Calu3 (cell line): ENCODE measurements at regions of chr7 and their contacts with region 1.

Region 1: GRCh38 chr7:130242198-130243014 is 24.3 kb upstream of the CPA2 start:
- DNase-seq: peak; percentile 77
- H3K4me3 Mint-ChIP-seq: no peak overlapping the region
- H3K27ac Mint-ChIP-seq: no peak overlapping the region
- H3K4me1 Mint-ChIP-seq: no peaks in the 10 kb centered on the region
- H3K27me3 Mint-ChIP-seq: peaks cover 22% of the 10 kb centered on the region
- CTCF ChIP-seq: peak; percentile 95

Region 2: GRCh38 chr7:130047821-130048220 is 194.6 kb before region 1 on chr7:
- CTCF ChIA-PET with region 1: no interaction called
- intact Hi-C with region 1: no loop called
- DNase-seq: no peak
- H3K4me3 Mint-ChIP-seq: no peak overlapping the region
- H3K27ac Mint-ChIP-seq: no peak overlapping the region
- H3K4me1 Mint-ChIP-seq: no peaks in the 10 kb centered on the region
- H3K27me3 Mint-ChIP-seq: no peaks in the 10 kb centered on the region
- CTCF ChIP-seq: no peak

Region 3: DNA sequence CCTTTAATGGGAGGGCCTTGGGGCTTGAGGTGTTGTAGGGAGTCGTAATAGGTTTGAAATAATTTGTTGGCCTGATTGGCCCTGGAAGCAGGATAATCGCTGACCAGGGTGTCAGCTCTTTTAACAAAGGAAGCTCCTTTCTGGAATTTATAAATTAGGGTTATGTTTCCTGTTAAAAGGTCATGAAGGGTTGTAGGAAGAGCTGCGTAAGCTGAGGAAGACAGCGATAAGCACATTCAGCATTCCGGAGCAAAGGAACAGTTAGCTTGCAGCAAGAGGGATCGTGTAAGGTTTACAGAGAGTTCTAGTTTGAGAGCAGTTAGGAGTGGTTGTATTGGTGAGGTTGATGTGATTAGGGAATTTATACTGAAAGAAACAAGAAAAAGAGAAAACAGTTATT is 71.9 kb after region 1 on chr7:
- CTCF ChIA-PET with region 1: no interaction called
- intact Hi-C with region 1: no loop called
- DNase-seq: no peak
- H3K4me3 Mint-ChIP-seq: no peak overlapping the region
- H3K27ac Mint-ChIP-seq: no peak overlapping the region
- H3K4me1 Mint-ChIP-seq: no peaks in the 10 kb centered on the region
- H3K27me3 Mint-ChIP-seq: peaks cover 9% of the 10 kb centered on the region
- CTCF ChIP-seq: no peak

Region 4: DNA sequence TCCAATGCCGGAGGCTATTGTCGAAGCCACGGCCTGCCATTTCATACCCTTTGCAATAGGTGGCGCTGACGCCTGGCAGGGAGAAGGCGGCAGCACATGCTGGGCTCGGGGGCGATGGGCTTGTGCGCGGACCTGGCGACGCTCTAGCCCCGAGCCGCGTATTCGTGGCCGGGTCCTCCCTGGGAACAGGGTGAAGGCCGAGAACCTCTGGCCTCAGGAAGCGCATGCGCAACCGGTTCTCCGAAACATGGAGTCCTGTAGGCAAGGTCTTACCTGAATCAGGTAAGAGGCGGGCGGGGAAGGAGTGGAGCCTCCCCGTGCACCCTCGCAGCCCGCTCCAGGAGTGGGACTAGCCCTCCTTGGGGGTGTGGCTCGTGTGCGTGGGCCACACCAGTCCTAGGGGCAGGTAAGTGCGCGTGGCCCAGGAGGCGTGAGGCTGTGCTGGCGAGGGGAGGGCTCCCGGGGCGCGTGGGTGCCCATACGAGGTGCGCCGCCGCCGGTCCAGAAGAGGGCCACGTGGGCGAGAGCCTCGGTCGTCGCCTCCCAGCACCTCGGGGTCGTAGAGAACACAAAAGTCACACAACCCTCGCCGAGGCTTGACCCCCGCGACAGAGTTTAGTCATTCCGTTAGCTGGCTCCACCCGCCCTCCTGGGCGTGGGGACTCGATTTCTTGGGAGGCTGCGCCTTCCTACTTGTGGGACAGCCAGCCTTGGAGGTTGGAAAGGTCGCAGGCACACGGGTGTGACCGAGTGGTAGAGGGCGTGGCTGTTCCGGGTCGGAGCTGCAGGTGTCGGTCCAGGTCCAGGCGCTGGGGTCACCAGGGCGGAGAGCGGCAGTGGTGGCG is 243.9 kb after region 1 on chr7:
- CTCF ChIA-PET with region 1: no interaction called
- intact Hi-C with region 1: loop called (anchors 5 kb)
- DNase-seq: peak; percentile 87
- H3K4me3 Mint-ChIP-seq: peak overlapping the region; percentile 89
- H3K27ac Mint-ChIP-seq: peak overlapping the region; percentile 43
- H3K4me1 Mint-ChIP-seq: peaks cover 46% of the 10 kb centered on the region
- H3K27me3 Mint-ChIP-seq: peaks cover 8% of the 10 kb centered on the region
- CTCF ChIP-seq: peak; percentile 87

Region 5: DNA sequence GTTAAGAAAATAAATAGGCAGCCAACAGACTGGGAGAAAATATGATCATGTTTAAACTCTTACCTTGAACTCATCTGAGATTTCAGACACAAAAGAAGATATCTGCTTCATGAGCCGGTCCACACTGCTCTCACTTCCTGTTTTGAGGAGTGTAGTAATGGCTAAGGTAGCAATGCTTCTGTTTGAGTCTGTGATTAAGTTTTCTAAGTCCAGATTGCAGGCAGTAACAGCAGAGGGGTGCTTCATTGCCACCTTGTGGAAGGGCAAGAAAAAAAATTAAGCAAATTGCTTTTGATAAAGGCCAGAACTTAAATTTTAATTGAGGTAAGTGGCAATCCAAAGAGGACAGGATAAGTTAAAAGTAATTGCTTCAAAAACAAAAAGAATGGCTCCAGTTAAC is 318.6 kb after region 1 on chr7:
- CTCF ChIA-PET with region 1: no interaction called
- intact Hi-C with region 1: loop called (anchors 1 kb)
- DNase-seq: peak; percentile 36
- H3K4me3 Mint-ChIP-seq: no peak overlapping the region
- H3K27ac Mint-ChIP-seq: no peak overlapping the region
- H3K4me1 Mint-ChIP-seq: no peaks in the 10 kb centered on the region
- H3K27me3 Mint-ChIP-seq: no peaks in the 10 kb centered on the region
- CTCF ChIP-seq: no peak

Region 6: GRCh38 chr7:130695840-130696239 is 453.4 kb after region 1 on chr7:
- CTCF ChIA-PET with region 1: no interaction called
- intact Hi-C with region 1: loop called (anchors 5 kb)
- DNase-seq: peak; percentile 9
- H3K4me3 Mint-ChIP-seq: no peak overlapping the region
- H3K27ac Mint-ChIP-seq: no peak overlapping the region
- H3K4me1 Mint-ChIP-seq: no peaks in the 10 kb centered on the region
- H3K27me3 Mint-ChIP-seq: no peaks in the 10 kb centered on the region
- CTCF ChIP-seq: peak; percentile 48

Region 7: DNA sequence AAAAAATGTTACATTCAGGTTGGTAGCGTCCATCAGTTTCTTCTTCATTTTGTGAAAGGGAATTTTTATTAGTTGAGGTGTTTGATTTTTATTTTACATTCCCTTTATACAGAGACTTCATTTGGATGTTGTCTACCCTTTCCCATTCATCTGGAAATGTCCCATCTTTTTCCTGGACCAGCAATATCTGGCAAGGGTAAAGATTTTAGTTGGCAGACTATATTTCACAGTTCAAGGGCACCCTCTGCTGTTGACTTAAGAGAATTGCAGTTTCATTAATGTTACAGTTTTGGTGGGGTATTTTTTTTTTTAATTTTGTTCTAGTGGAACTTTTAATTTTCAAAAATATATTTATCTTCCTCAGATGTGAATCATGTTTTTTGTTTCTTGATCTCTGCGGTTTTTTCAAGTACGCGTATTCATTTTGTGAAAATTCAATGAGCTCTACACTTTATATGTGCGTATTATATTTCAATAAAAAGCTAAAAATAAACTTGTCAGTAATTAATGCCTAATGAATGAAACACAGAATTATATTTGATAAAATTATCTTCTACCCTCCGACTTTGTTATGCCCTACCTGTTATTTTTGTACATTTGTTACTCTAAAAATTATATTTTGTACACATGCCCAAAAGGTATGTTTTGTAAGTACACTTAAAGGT is 589.5 kb after region 1 on chr7:
- CTCF ChIA-PET with region 1: no interaction called
- intact Hi-C with region 1: loop called (anchors 2 kb)
- DNase-seq: peak; percentile 29
- H3K4me3 Mint-ChIP-seq: no peak overlapping the region
- H3K27ac Mint-ChIP-seq: no peak overlapping the region
- H3K4me1 Mint-ChIP-seq: no peaks in the 10 kb centered on the region
- H3K27me3 Mint-ChIP-seq: peaks cover 16% of the 10 kb centered on the region
- CTCF ChIP-seq: peak; percentile 70